Ascending aorta (tissue), 2 donors: ENCODE measurements at regions of chr12 and their contacts with region 1.

Region 1: DNA sequence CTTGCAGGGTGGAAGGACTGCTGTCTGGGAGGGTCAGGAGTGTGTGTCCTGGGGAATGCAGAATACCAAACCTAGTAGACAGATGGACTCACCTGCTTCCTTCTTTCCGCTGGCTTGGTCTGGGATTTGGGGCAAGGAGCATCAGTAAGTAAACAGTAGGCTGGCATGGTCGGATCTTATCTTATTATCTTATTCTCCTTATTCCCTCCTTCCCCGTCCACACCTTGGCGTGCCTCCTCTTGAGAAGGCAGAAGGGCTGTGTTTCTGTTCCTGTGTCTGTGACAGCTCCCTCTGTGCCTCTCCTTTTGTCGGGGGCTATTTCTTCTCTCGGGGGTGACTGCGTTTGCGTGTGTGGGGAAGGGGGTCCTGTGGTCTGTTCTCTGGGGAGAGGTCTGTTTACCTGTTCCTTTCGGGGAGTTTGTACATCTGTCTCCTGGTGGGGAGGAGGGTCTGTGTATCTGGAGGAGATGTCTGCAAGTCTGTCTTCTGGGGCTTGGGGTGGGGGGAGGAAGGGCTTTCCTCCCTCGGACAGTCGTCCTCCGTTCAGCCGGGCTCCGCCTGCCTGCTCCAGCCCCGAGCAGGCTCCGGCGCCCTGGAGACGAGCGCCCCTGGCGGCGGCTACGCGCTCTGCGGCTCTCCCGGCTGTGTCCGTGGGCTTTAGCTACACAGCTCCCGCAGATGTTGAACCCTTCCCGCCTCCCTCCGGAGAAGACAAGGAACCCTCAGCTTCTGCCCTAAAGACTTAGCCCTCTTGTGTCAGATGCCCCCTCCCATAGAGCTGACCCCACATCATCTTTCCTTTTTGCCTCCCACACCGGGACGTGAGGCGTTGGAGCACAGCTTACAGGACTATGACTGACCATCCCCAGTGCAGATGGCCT is 4.3 kb downstream of the KRT86 start:
- DNase-seq: peak in 1 of 2 donors; percentile 87
- H3K4me3 ChIP-seq: peak overlapping the region in 1 of 2 donors; percentile 48
- H3K27ac ChIP-seq: peak overlapping the region; percentile 81 to 94
- H3K4me1 ChIP-seq: peaks cover 7 to 28% of the 10 kb centered on the region in 2 donors
- H3K27me3 ChIP-seq: no peaks in the 10 kb centered on the region
- CTCF ChIP-seq: peak; percentile 95 to 100 (median 99)

Region 2: GRCh38 chr12:51951199-51951842 is 327.5 kb before region 1 on chr12 and contains the start of gene ACVR1B:
- intact Hi-C with region 1: loop called (anchors 5 kb)
- DNase-seq: peak; percentile 62 to 96
- H3K4me3 ChIP-seq: peak within 1 kb of the TSS; percentile 94 to 97
- H3K27ac ChIP-seq: peak within 1 kb of the TSS; percentile 80 to 85
- H3K4me1 ChIP-seq: peaks cover 9 to 17% of the 10 kb centered on the region in 2 donors
- H3K27me3 ChIP-seq: no peaks in the 10 kb centered on the region
- CTCF ChIP-seq: no peak
- total RNA-seq, gene ACVR1B: 18.7 TPM

Region 3: DNA sequence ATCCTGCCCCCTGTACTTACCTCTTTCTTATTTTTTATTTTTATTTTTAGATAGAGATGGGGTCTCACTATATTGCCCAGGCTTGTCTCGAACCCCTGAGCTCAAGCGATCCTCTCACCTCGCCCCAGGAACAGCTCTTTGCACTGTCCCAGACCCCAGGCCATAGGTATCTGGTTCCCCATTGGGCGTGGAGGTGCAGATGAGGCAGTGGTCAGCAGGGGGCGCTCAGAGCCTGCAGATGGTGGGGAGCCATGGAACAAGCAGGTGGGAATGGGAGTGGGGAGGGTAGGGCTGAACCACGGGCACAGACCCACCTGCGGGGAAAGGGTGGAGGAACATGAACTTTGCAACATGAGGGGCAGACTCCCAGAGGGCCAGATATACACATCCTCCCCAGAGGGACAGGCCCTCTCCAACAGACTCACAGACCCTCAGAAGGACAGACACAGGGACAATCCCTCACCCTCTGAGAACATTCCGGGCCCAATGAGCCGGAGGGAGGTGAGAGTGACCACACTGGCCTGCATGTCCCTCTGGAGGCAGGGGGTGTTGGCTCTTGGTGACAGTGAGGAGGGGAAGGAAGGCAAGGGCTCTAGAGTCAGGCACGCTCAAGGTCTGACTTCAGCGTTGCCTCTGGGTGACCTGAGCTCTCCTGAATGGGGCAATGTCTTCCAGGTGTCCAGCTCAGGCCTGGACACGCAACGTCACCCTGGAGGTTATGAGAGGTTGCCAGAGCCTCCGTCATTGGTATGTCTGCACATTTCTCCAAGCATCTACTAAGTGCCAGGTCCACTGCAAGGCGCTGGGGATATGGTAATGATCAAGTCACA is 121.8 kb before region 1 on chr12:
- intact Hi-C with region 1: loop called (anchors 2 kb)
- DNase-seq: peak in 1 of 2 donors; percentile 88
- H3K4me3 ChIP-seq: no peak overlapping the region
- H3K27ac ChIP-seq: no peak overlapping the region
- H3K4me1 ChIP-seq: peaks cover 0 to 6% of the 10 kb centered on the region in 2 donors
- H3K27me3 ChIP-seq: no peaks in the 10 kb centered on the region
- CTCF ChIP-seq: peak; percentile 87 to 98 (median 95)

Region 4: GRCh38 chr12:52221912-52222457 is 56.8 kb before region 1 on chr12:
- intact Hi-C with region 1: loop called (anchors 2 kb)
- DNase-seq: peak in 1 of 2 donors; percentile 85
- H3K4me3 ChIP-seq: no peak overlapping the region
- H3K27ac ChIP-seq: peak overlapping the region; percentile 22 to 54
- H3K4me1 ChIP-seq: peaks cover 7 to 44% of the 10 kb centered on the region in 2 donors
- H3K27me3 ChIP-seq: no peaks in the 10 kb centered on the region
- CTCF ChIP-seq: peak in 2 of 3 experiments; percentile 36 to 45

Region 5: DNA sequence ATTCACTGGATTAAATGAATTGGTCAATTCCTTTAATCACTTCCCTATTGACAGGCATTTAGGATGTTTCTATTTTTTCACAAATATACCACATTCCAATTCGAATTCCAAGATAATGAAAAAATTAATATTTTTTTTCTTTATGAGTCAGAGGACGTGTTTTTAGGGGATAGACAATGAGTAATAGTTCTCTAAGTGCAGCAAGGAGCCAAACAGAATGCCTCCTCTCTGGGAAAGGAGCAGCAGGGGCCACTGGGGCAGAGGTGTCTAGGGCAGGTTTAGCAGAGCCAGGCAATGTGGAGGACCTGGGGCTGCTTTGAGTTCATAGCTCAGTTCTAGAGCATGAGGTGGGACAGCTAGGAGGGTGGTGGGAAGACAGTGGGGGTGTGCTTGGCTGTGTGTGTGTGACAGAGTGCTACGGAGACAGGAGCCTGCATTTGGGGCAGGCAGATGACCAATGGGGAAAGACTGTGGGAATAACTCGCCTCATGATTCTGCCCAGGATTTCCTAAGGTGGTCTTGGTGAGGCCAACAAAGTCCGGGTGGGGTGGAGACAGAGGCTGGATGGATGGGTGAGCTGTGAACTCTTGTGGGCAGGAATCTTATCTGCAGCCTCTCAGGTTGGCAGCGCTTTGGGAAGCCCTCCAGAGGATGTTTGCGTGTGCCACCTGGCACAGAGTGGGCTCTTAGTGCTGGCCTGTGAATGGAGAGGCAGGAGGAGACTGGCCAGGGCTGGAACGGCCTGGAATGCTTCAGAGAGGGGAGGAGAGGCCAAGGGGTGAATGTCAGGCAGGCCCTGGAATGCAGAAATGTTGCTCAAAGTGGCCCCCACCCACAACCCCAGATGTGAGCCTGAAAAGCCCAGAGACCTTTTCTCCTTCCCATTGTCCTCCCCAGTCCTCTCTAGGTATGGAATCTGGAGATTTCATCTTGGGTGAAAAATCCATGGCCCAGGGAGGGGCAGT is 48.2 kb before region 1 on chr12:
- intact Hi-C with region 1: loop called (anchors 1 kb)
- DNase-seq: peak in 1 of 2 donors; percentile 84
- H3K4me3 ChIP-seq: no peak overlapping the region
- H3K27ac ChIP-seq: peak overlapping the region; percentile 74 to 83
- H3K4me1 ChIP-seq: peaks cover 15 to 44% of the 10 kb centered on the region in 2 donors
- H3K27me3 ChIP-seq: peaks cover 4% of the 10 kb centered on the region
- CTCF ChIP-seq: no peak

Region 6: DNA sequence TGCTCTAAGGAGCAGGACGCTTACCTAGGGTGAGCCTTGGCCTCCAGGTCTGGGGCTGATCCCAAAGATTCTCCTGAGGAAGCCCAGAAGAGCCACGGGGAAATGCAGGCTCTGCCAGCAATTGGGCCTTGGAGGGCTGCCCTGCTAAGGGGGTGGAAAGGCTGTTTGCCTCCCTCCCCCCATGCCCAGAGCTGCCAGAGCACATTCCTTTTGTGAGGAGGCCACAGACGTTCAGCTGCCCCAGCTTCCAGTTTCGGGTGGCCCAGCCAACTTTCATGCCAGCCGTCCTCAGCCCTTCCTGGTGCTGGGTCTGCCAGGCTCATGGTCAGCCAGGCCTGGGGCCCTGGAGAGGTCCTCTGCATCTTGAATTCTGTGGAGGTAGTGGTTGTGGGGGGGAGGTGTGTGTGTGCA is 29.7 kb before region 1 on chr12:
- intact Hi-C with region 1: loop called (anchors 2 kb)
- DNase-seq: peak in 1 of 2 donors; percentile 89
- H3K4me3 ChIP-seq: no peak overlapping the region
- H3K27ac ChIP-seq: peak overlapping the region; percentile 88 to 89
- H3K4me1 ChIP-seq: peaks cover 10 to 52% of the 10 kb centered on the region in 2 donors
- H3K27me3 ChIP-seq: no peaks in the 10 kb centered on the region
- CTCF ChIP-seq: no peak

Region 7: GRCh38 chr12:52327052-52327829 is 48.5 kb after region 1 on chr12:
- intact Hi-C with region 1: loop called (anchors 2 kb)
- DNase-seq: peak; percentile 66 to 93
- H3K4me3 ChIP-seq: no peak overlapping the region
- H3K27ac ChIP-seq: peak overlapping the region; percentile 59 to 64
- H3K4me1 ChIP-seq: peaks cover 7% of the 10 kb centered on the region in 2 donors
- H3K27me3 ChIP-seq: no peaks in the 10 kb centered on the region
- CTCF ChIP-seq: peak; percentile 76 to 89 (median 89)